ENCODE measurements at regions of chr3 and their contacts with region 1.

Region 1: DNA sequence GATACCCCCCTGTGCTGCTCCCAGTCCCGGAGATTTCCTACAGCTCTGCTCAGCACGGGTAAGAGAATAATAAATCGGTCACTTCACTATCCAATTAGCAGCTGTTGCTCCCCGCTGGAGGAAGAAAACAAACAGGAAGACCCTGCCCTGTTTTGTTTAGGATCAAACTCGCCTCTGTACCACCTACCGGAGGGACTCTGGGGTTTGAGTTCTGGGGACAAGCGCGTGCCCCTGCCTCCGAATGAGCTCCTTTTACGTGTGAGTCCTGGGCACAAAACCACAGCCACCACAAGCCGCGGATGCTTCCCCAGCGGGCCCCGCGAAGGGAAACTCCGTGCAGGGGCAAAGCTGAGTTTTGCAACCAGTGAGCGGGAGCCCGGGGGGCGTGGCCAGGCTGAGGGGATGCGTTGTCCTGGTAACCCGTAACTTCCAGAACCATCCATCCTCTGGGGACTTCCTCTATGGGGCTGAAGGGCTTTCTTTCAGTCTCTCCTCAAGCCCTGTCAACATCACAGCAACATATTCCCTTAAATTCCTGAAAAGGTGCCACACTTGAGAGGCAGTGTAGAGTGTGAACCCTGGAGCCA is 315.7 kb upstream of the PROK2 start:
- DNase-seq: peak; percentile 97
- ATAC-seq: peak; percentile 60
- H3K4me3 ChIP-seq: peak overlapping the region; percentile 28 to 70 (median 49)
- H3K4me3 Mint-ChIP-seq: peak overlapping the region; percentile 62
- H3K27ac ChIP-seq: peak overlapping the region; percentile 70 to 78
- H3K27ac Mint-ChIP-seq: peak overlapping the region; percentile 85
- H3K4me1 ChIP-seq: peaks cover 60 to 69% of the 10 kb centered on the region in 2 donors
- H3K4me1 Mint-ChIP-seq: peaks cover 63% of the 10 kb centered on the region
- H3K27me3 ChIP-seq: peaks cover 0 to 12% (median 0%) of the 10 kb centered on the region in 4 experiments
- H3K27me3 Mint-ChIP-seq: peaks cover 9% of the 10 kb centered on the region
- CTCF ChIP-seq: no peak

Region 2: GRCh38 chr3:71725279-71725991 is 375.3 kb before region 1 on chr3 and contains the start of gene EIF4E3:
- CTCF ChIA-PET with region 1: no interaction called
- POLR2A ChIA-PET with region 1: interaction called, 3 read pairs
- intact Hi-C with region 1: loop called (anchors 10 kb)
- DNase-seq: peak; percentile 51
- ATAC-seq: peak; percentile 73
- H3K4me3 ChIP-seq: peak within 1 kb of the TSS; percentile 59 to 71 (median 68)
- H3K4me3 Mint-ChIP-seq: peak within 1 kb of the TSS; percentile 82
- H3K27ac ChIP-seq: no peak within 1 kb of the TSS
- H3K27ac Mint-ChIP-seq: peak within 1 kb of the TSS; percentile 43
- H3K4me1 ChIP-seq: peaks cover 29% of the 10 kb centered on the region in 2 donors
- H3K4me1 Mint-ChIP-seq: peaks cover 43% of the 10 kb centered on the region
- H3K27me3 ChIP-seq: peaks cover 0 to 27% (median 0%) of the 10 kb centered on the region in 4 experiments
- H3K27me3 Mint-ChIP-seq: peaks cover 8% of the 10 kb centered on the region
- CTCF ChIP-seq: no peak
- total RNA-seq, gene EIF4E3: 4.2 and 5.0 TPM in 2 replicates

Region 3: GRCh38 chr3:72082186-72082715 is 18.4 kb before region 1 on chr3:
- CTCF ChIA-PET with region 1: interaction called, 7 read pairs
- POLR2A ChIA-PET with region 1: interaction called, 3 read pairs
- intact Hi-C with region 1: loop called (anchors 1 kb)
- DNase-seq: peak; percentile 89
- ATAC-seq: peak; percentile 84
- H3K4me3 ChIP-seq: peak overlapping the region in 4 of 5 experiments; percentile 3 to 31 (median 12)
- H3K4me3 Mint-ChIP-seq: peak overlapping the region; percentile 61
- H3K27ac ChIP-seq: peak overlapping the region; percentile 43 to 66
- H3K27ac Mint-ChIP-seq: peak overlapping the region; percentile 47
- H3K4me1 ChIP-seq: peaks cover 65 to 73% of the 10 kb centered on the region in 2 donors
- H3K4me1 Mint-ChIP-seq: peaks cover 71% of the 10 kb centered on the region
- H3K27me3 ChIP-seq: peaks cover 0 to 12% (median 4%) of the 10 kb centered on the region in 4 experiments
- H3K27me3 Mint-ChIP-seq: peaks cover 8% of the 10 kb centered on the region
- CTCF ChIP-seq: no peak

Region 4: GRCh38 chr3:72163809-72164634 is 63.3 kb after region 1 on chr3:
- CTCF ChIA-PET with region 1: interaction called, 8 read pairs
- POLR2A ChIA-PET with region 1: interaction called, 11 read pairs
- intact Hi-C with region 1: loop called (anchors 1 kb)
- DNase-seq: peak; percentile 92
- ATAC-seq: peak; percentile 93
- H3K4me3 ChIP-seq: peak overlapping the region in 2 of 5 experiments; percentile 14 to 43
- H3K4me3 Mint-ChIP-seq: peak overlapping the region; percentile 75
- H3K27ac ChIP-seq: peak overlapping the region; percentile 83 to 86
- H3K27ac Mint-ChIP-seq: peak overlapping the region; percentile 61
- H3K4me1 ChIP-seq: peaks cover 47 to 52% of the 10 kb centered on the region in 2 donors
- H3K4me1 Mint-ChIP-seq: peaks cover 57% of the 10 kb centered on the region
- H3K27me3 ChIP-seq: peaks cover 0 to 2% (median 0%) of the 10 kb centered on the region in 4 experiments
- H3K27me3 Mint-ChIP-seq: peaks cover 12% of the 10 kb centered on the region
- CTCF ChIP-seq: no peak

Region 5: GRCh38 chr3:72310419-72311380 is 210.0 kb after region 1 on chr3:
- CTCF ChIA-PET with region 1: interaction called, 3 read pairs
- POLR2A ChIA-PET with region 1: interaction called, 5 read pairs
- intact Hi-C with region 1: loop called (anchors 2 kb)
- DNase-seq: peak; percentile 89
- ATAC-seq: peak; percentile 98
- H3K4me3 ChIP-seq: peak overlapping the region; percentile 7 to 53 (median 18)
- H3K4me3 Mint-ChIP-seq: peak overlapping the region; percentile 82
- H3K27ac ChIP-seq: peak overlapping the region; percentile 76 to 88
- H3K27ac Mint-ChIP-seq: peak overlapping the region; percentile 90
- H3K4me1 ChIP-seq: peaks cover 42 to 46% of the 10 kb centered on the region in 2 donors
- H3K4me1 Mint-ChIP-seq: peaks cover 55% of the 10 kb centered on the region
- H3K27me3 ChIP-seq: no peaks in the 10 kb centered on the region
- H3K27me3 Mint-ChIP-seq: no peaks in the 10 kb centered on the region
- CTCF ChIP-seq: no peak

Measured in B cell (primary cell).